H1 (cell line): ENCODE measurements at regions of chr2 and their contacts with region 1.

Region 1: DNA sequence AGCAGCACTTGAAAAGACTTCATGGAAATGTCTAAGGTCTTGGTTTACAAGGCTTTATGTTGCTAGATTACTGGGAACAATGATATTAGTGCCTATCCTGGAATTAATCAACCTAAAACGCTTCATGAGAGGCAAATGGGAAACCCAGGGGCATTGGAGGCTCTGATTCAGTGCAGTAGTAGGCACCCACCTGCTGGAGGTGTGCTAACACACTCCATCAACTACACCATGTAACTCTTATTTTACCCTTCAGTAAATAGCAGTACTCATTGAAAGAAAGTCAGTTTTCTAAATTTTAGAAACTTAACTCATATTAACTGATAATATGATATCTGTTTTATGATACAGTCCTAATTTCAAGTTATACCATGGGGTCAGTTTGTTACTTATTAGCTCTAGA is 17.4 kb upstream of the HNRNPA3 start:
- DNase-seq: no peak
- H3K4me3 ChIP-seq: no peak overlapping the region
- H3K27ac ChIP-seq: no peak overlapping the region
- H3K4me1 ChIP-seq: no peaks in the 10 kb centered on the region
- H3K27me3 ChIP-seq: no peaks in the 10 kb centered on the region
- CTCF ChIP-seq: peak; percentile 34 to 54 (median 37); a peak in 3 of 4 replicates
- EP300 ChIP-seq: no peak
- POLR2A ChIP-seq: no peak
- RAD21 ChIP-seq: peak; percentile 54 to 56

Region 2: GRCh38 chr2:176914371-176914770 is 280.8 kb before region 1 on chr2:
- CTCF ChIA-PET with region 1: no interaction called
- POLR2A ChIA-PET with region 1: no interaction called
- DNase-seq: no peak
- H3K4me3 ChIP-seq: no peak overlapping the region
- H3K27ac ChIP-seq: no peak overlapping the region
- H3K4me1 ChIP-seq: no peaks in the 10 kb centered on the region
- H3K27me3 ChIP-seq: no peaks in the 10 kb centered on the region
- CTCF ChIP-seq: no peak
- EP300 ChIP-seq: no peak
- POLR2A ChIP-seq: no peak
- RAD21 ChIP-seq: no peak

Region 3: GRCh38 chr2:177169810-177170514 is 25.2 kb before region 1 on chr2:
- CTCF ChIA-PET with region 1: interaction called, 107 read pairs
- POLR2A ChIA-PET with region 1: no interaction called
- DNase-seq: no peak
- H3K4me3 ChIP-seq: no peak overlapping the region
- H3K27ac ChIP-seq: 0 out of 2 replicates have a peak overlapping the region, but pooled peaks have one; percentile 21
- H3K4me1 ChIP-seq: peaks cover 1 to 7% (median 5%) of the 10 kb centered on the region in 4 experiments; a peak in 5 of 7 replicates
- H3K27me3 ChIP-seq: peaks cover 0 to 2% (median 0%) of the 10 kb centered on the region in 4 experiments; a peak in 1 of 7 replicates
- CTCF ChIP-seq: no peak
- EP300 ChIP-seq: no peak
- POLR2A ChIP-seq: no peak
- RAD21 ChIP-seq: no peak

Region 4: GRCh38 chr2:177183860-177184259 is 11.3 kb before region 1 on chr2:
- CTCF ChIA-PET with region 1: interaction called, 32 read pairs
- POLR2A ChIA-PET with region 1: interaction called, 4 read pairs
- DNase-seq: no peak
- H3K4me3 ChIP-seq: no peak overlapping the region
- H3K27ac ChIP-seq: no peak overlapping the region
- H3K4me1 ChIP-seq: peaks cover 0 to 6% (median 4%) of the 10 kb centered on the region in 4 experiments; a peak in 2 of 7 replicates
- H3K27me3 ChIP-seq: no peaks in the 10 kb centered on the region
- CTCF ChIP-seq: no peak
- EP300 ChIP-seq: no peak
- POLR2A ChIP-seq: no peak
- RAD21 ChIP-seq: no peak

Region 5: GRCh38 chr2:177221534-177221933 is 26.3 kb after region 1 on chr2:
- CTCF ChIA-PET with region 1: interaction called, 33 read pairs
- POLR2A ChIA-PET with region 1: interaction called, 18 read pairs
- DNase-seq: no peak
- H3K4me3 ChIP-seq: no peak overlapping the region
- H3K27ac ChIP-seq: no peak overlapping the region
- H3K4me1 ChIP-seq: no peaks in the 10 kb centered on the region
- H3K27me3 ChIP-seq: no peaks in the 10 kb centered on the region
- CTCF ChIP-seq: no peak
- EP300 ChIP-seq: no peak
- POLR2A ChIP-seq: peak; percentile 22 to 42; a peak in 2 of 3 replicates
- RAD21 ChIP-seq: no peak

Region 6: DNA sequence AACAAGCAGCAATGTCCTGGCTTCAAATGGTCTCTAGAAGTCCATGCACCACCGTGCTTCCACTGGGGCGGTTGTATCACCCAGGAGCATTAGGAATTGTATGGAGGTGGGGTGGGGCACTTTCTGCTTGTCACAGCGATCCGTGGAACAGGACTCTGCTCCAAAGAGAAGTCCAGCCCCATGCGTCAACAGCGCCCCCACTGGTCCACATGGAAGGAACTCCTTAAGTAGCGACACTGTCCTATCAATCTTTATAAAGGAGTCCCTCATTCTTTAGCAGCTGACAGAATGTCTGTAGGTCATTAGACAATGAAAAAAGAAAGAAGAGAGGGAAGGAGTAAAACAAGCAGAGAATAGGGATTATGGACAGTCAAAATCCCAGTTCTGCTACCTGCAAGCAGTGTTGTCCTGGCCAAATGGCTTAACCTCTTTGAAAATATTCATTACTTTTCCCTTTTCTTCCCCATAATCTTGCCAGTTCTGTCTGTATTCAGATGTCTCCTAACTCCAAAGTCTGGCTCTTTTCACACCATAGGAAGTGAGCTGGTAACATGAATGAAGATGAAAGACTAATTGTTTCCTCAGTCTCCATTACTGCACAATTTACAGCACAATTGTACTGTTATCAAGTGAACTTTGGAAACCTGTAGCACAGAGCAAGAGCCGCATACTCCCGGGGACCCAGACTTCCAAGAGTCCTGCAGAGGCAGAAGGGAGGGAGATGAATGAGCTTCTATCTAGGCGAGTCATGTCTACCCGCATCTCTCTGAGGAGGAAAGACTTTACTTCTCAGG is 59.4 kb after region 1 on chr2:
- CTCF ChIA-PET with region 1: interaction called, 10 read pairs
- POLR2A ChIA-PET with region 1: no interaction called
- DNase-seq: peak; percentile 39 to 86
- H3K4me3 ChIP-seq: no peak overlapping the region
- H3K27ac ChIP-seq: no peak overlapping the region
- H3K4me1 ChIP-seq: peaks cover 0 to 7% (median 0%) of the 10 kb centered on the region in 4 experiments; a peak in 1 of 7 replicates
- H3K27me3 ChIP-seq: no peaks in the 10 kb centered on the region
- CTCF ChIP-seq: peak; percentile 66 to 92 (median 89)
- EP300 ChIP-seq: no peak
- POLR2A ChIP-seq: no peak
- RAD21 ChIP-seq: peak; percentile 52 to 73

Region 7: GRCh38 chr2:177281400-177282180 is 86.4 kb after region 1 on chr2:
- CTCF ChIA-PET with region 1: interaction called, 15 read pairs
- POLR2A ChIA-PET with region 1: no interaction called
- DNase-seq: no peak
- H3K4me3 ChIP-seq: no peak overlapping the region; a peak in 1 of 8 replicates
- H3K27ac ChIP-seq: no peak overlapping the region
- H3K4me1 ChIP-seq: no peaks in the 10 kb centered on the region
- H3K27me3 ChIP-seq: no peaks in the 10 kb centered on the region
- CTCF ChIP-seq: no peak
- EP300 ChIP-seq: no peak
- POLR2A ChIP-seq: no peak
- RAD21 ChIP-seq: no peak

Region 8: DNA sequence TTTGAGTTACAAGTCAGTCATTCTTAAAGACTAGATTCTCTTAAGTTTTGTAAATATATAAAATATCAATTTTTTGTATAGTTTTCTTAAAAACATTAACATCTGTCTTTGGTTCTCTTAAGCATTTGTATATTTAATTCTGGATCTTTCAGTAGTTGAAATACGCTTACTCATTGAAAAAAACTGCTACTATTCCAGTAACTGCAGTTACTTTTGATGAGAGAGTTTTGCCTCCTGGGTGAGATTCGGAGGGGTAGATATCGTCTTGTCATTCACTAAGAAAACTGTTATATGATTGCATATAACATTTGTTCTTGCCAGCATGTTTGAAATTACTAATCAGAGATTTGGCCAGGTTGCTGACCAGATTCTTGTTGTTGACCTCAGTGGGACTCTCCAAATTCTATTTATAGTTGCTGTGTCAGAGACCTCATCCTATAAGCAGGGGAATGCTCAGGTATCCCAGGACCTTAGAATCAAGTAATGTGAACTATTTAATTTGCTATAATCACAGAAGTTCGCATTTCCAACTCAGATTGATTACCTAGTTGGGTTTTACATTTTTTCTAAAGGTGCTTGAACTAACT is 205.2 kb after region 1 on chr2:
- CTCF ChIA-PET with region 1: no interaction called
- POLR2A ChIA-PET with region 1: no interaction called
- DNase-seq: no peak
- H3K4me3 ChIP-seq: no peak overlapping the region
- H3K27ac ChIP-seq: no peak overlapping the region
- H3K4me1 ChIP-seq: peaks cover 0 to 2% (median 0%) of the 10 kb centered on the region in 4 experiments; a peak in 1 of 7 replicates
- H3K27me3 ChIP-seq: no peaks in the 10 kb centered on the region
- CTCF ChIP-seq: no peak
- EP300 ChIP-seq: no peak
- POLR2A ChIP-seq: no peak
- RAD21 ChIP-seq: no peak